Spleen (tissue), 13 donors: ENCODE measurements at regions of chr6 and their contacts with region 1.

Region 1: DNA sequence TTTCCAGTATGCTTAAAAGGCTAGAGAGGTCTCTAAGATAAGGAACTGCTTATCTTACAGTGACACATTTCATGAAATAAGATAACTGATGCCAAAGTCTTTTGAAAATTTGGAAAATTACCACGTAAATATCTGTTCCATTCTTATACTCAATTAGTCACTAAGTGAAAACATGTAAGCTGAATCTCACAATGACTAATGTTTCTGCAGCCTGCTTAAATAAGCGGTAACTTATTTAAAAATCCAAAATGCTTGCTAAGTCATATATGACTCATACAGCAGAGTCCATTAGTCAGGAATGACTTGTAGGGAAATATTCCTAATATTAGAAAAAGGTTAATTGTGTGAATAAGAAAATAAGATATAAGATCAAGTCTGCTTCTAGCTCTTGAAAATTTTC is 27.8 kb upstream of the LGSN start:
- DNase-seq: no peak
- H3K4me3 ChIP-seq: no peak overlapping the region
- H3K27ac ChIP-seq: no peak overlapping the region
- H3K4me1 ChIP-seq: peaks cover 0 to 12% (median 6%) of the 10 kb centered on the region in 6 donors
- H3K27me3 ChIP-seq: no peaks in the 10 kb centered on the region
- CTCF ChIP-seq: no peak
- POLR2A ChIP-seq: no peak

Region 2: GRCh38 chr6:63441266-63441956 is 93.8 kb after region 1 on chr6:
- intact Hi-C with region 1: no loop called
- DNase-seq: no peak
- H3K4me3 ChIP-seq: peak overlapping the region in 2 of 8 donors; percentile 8 to 27
- H3K27ac ChIP-seq: no peak overlapping the region
- H3K4me1 ChIP-seq: no peaks in the 10 kb centered on the region
- H3K27me3 ChIP-seq: no peaks in the 10 kb centered on the region
- CTCF ChIP-seq: no peak
- POLR2A ChIP-seq: no peak

Region 3: DNA sequence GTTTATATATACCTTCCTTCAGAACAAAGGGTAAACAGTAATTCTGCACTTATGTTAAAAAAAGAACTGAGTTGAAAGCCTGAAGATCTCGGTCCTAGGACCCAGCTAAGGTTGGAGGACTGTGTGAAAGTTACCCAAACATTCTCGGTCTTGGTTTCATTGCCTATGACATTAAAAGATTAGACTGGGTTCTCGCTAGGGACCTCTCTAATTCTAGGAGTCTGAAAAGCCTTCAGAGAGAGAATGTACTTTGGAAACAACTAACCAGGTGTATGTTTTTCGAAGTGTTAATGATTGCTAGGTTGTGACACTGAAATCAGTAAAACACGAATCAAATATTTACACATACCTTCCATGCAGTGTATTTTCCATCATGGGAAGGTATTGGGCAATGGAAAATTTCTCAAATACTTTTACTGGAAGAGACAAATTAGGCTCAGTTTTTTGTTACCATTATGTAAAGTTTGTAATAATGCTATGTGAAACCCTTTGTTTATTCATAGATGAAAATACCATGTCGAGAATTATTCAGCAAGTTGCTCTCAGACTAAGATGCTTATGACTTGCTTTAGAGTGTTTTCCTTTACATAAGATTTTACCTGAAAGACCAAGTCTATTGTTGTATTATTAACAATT is 111.0 kb after region 1 on chr6:
- intact Hi-C with region 1: no loop called
- DNase-seq: no peak
- H3K4me3 ChIP-seq: no peak overlapping the region
- H3K27ac ChIP-seq: no peak overlapping the region
- H3K4me1 ChIP-seq: no peaks in the 10 kb centered on the region
- H3K27me3 ChIP-seq: no peaks in the 10 kb centered on the region
- CTCF ChIP-seq: no peak
- POLR2A ChIP-seq: no peak

Region 4: GRCh38 chr6:63487138-63487813 is 139.7 kb after region 1 on chr6:
- intact Hi-C with region 1: no loop called
- DNase-seq: no peak
- H3K4me3 ChIP-seq: no peak overlapping the region
- H3K27ac ChIP-seq: no peak overlapping the region
- H3K4me1 ChIP-seq: no peaks in the 10 kb centered on the region
- H3K27me3 ChIP-seq: peaks cover 0 to 6% (median 0%) of the 10 kb centered on the region in 7 donors
- CTCF ChIP-seq: no peak
- POLR2A ChIP-seq: no peak

Region 5: DNA sequence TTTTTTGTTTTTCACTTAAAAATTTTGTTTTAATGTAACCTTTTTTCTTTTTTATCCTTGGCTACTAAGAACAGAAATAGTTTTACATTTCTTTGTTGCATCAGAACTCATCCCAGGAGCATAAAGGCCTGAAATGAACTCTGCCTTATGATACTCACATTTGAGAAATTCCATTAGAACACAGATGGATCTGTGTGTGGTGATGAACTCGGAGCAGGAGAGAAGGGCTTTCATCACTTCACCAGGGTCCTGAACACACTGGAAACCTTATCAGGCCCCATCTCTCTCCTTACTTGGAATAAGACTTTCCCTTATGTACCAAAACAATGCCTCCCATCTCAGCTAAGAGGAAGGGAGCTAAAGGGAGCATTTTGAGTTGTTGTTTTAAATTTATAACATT is 427.4 kb after region 1 on chr6:
- intact Hi-C with region 1: loop called (anchors 10 kb)
- DNase-seq: no peak
- H3K4me3 ChIP-seq: no peak overlapping the region
- H3K27ac ChIP-seq: no peak overlapping the region
- H3K4me1 ChIP-seq: no peaks in the 10 kb centered on the region
- H3K27me3 ChIP-seq: no peaks in the 10 kb centered on the region
- CTCF ChIP-seq: no peak
- POLR2A ChIP-seq: no peak